Adrenal gland (tissue), 19 donors: ENCODE measurements at regions of chr15 and their contacts with region 1.

Region 1: DNA sequence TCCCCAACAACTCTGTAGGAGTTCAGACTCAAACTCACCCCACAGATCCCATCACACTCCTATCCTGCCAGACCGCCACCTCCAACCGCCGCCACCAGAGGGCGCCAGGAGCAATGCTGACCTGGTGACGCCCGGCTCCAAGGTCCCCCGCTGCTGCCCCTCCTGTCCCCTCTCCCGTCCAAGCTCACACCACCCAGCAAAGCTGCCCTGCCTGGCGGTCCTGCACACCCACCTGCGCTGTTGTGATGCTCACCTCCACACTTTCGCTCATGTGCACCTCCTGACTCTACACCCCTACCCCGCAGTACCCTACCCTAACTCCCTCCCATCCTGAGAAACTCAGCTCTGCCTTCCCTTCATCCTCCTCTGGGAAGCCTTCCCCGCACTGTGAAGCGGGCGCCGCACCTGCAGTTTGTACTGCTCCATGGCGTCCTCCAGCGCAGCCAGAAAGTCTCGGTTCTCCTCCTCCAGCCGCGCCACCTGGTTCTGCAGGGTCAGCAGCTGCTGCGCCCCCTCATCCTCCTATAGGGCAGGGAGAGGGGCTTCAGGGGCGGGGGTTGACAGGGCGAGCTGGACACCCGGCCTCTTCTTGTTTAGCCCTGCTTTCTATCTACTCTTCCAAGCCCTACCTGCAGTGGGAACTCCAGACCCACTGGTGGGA is 7.9 kb downstream of the KIF7 start:
- DNase-seq: peak; percentile 71 to 90 (median 84)
- H3K4me3 ChIP-seq: no peak overlapping the region
- H3K27ac ChIP-seq: no peak overlapping the region
- H3K4me1 ChIP-seq: no peaks in the 10 kb centered on the region
- H3K27me3 ChIP-seq: no peaks in the 10 kb centered on the region
- CTCF ChIP-seq: peak; percentile 74 to 84 (median 77)
- POLR2A ChIP-seq: no peak

Region 2: DNA sequence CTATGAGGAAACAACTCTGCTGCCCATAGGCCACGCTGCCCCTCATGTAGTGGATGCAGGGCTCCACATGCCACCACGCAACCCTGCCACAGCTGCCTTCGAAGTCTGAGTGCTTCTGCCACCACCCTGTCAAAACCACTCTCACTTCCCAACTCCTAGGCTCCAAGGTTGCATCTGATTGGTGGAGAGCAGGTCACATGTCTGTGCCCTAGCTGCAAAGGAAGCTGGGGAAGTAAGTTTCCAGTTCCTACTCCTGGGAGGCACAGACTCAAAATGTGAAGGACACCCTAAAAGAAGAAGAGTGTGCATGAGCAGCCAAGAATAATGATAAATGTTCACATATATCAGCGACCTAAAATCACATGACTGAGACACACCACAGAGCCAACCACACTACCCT is 103.9 kb before region 1 on chr15:
- intact Hi-C with region 1: no loop called
- DNase-seq: no peak
- H3K4me3 ChIP-seq: no peak overlapping the region
- H3K27ac ChIP-seq: no peak overlapping the region
- H3K4me1 ChIP-seq: no peaks in the 10 kb centered on the region
- H3K27me3 ChIP-seq: no peaks in the 10 kb centered on the region
- CTCF ChIP-seq: no peak
- POLR2A ChIP-seq: no peak

Region 3: GRCh38 chr15:89575146-89575655 is 72.1 kb before region 1 on chr15 and contains the start of gene TICRR:
- intact Hi-C with region 1: no loop called
- DNase-seq: peak; percentile 95 to 99 (median 98)
- H3K4me3 ChIP-seq: peak within 1 kb of the TSS in 3 of 4 donors; percentile 30 to 78 (median 47)
- H3K27ac ChIP-seq: no peak within 1 kb of the TSS
- H3K4me1 ChIP-seq: peaks cover 6 to 10% of the 10 kb centered on the region in 2 donors
- H3K27me3 ChIP-seq: no peaks in the 10 kb centered on the region
- CTCF ChIP-seq: no peak
- POLR2A ChIP-seq: no peak
- total RNA-seq, gene TICRR: 0.12 to 2.4 (median 0.22) TPM in 8 of 9 donors, not detected in the other

Region 4: DNA sequence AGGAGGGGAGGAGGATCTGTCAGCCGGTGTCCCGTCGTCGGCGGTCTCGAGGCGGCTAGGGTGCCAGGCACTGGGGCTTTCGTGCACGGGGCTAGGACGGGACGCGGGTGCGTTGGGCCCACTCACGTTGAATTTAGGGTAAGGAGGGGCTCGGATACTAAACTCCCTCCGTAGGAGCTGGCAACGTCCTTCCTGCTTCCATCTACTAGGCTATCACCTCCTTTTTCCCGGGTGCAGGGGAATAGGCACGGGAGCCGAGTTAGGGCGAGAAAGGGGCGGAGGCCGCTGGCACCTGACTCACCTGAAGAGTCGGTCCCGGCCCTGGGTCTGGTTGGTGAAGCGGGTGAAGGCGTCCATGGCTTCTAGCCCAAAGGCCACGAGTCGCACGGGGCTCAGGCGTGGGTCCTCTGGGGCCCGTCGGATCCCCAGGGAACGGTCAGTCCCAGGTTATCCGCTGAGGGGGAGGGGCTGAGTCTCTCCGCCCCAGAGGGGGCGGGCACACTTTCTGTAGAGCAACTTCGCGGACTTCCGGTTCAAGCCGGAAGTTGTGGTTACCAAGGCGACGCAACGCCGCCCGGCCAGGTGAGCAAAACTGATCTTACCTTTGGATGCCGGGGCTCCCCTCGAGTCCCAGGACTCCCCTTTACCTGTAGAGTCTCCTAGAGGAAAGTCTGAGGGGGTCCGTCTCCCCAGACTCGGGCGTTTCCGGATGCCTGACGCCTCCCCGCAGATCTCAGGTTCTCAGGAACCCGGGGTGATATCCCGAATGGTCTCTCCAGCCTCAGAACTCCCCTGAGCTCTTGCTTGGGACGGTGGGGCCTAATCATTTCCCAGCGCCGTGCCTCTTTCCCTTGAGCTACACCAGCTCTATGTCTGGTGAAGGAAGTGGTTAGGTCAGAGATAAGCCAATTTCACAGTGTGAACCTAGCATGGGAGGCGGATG is 43.2 kb after region 1 on chr15 and contains the starts of genes PEX11A and WDR93:
- intact Hi-C with region 1: loop called in 1 of 2 experiments (anchors 5 kb)
- DNase-seq: peak; percentile 75 to 89 (median 85)
- H3K4me3 ChIP-seq: peak within 1 kb of the TSS; percentile 17 to 82 (median 66)
- H3K27ac ChIP-seq: peak within 1 kb of the TSS in 4 of 5 donors; percentile 2 to 73 (median 32)
- H3K4me1 ChIP-seq: peaks cover 0 to 14% of the 10 kb centered on the region in 2 donors
- H3K27me3 ChIP-seq: no peaks in the 10 kb centered on the region
- CTCF ChIP-seq: no peak
- POLR2A ChIP-seq: peak in 1 of 2 donors; percentile 28
- total RNA-seq, gene PEX11A: 7.7 to 23.2 (median 14.7) TPM
- total RNA-seq, gene WDR93: 0.14 to 0.43 (median 0.26) TPM in 5 of 9 donors, not detected in the others

Region 5: DNA sequence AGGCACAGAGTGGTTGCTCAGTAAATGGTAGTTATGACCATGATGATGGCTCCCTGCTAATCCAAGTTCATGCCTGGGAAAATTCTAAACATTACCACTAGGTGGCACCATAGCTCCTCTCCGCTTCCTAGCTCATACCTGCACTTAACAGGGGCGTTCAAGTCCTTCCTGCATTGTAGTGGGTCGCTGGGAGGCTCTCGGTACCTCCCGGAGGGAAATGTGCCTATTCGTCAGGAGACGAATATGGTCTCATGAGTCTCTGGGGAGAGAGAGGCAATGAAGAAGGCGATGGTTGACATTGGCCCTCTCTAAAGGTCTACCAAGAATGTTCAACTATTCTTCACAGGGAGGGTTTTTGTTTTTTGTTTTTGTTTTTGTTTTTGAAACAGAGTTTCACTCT is 92.8 kb after region 1 on chr15:
- intact Hi-C with region 1: loop called (anchors 10 kb)
- DNase-seq: peak; percentile 34 to 78 (median 60)
- H3K4me3 ChIP-seq: no peak overlapping the region
- H3K27ac ChIP-seq: no peak overlapping the region
- H3K4me1 ChIP-seq: no peaks in the 10 kb centered on the region
- H3K27me3 ChIP-seq: no peaks in the 10 kb centered on the region
- CTCF ChIP-seq: peak; percentile 77 to 97 (median 89)
- POLR2A ChIP-seq: no peak